ENCODE measurements at regions of chr9 and their contacts with region 1.

Region 1: GRCh38 chr9:77456829-77457437 is 191.2 kb downstream of the GNA14 start:
- DNase-seq: peak; percentile 91
- H3K4me3 ChIP-seq: no peak overlapping the region
- H3K27ac ChIP-seq: no peak overlapping the region
- H3K4me1 ChIP-seq: peaks cover 4% of the 10 kb centered on the region
- H3K27me3 ChIP-seq: no peaks in the 10 kb centered on the region
- CTCF ChIP-seq: peak; percentile 42 to 94 (median 86)
- POLR2A ChIP-seq: no peak

Region 2: GRCh38 chr9:77534376-77535057 is 77.6 kb after region 1 on chr9:
- intact Hi-C with region 1: no loop called
- DNase-seq: peak; percentile 62
- H3K4me3 ChIP-seq: no peak overlapping the region
- H3K27ac ChIP-seq: peak overlapping the region; percentile 50 to 77
- H3K4me1 ChIP-seq: peaks cover 14% of the 10 kb centered on the region
- H3K27me3 ChIP-seq: no peaks in the 10 kb centered on the region
- CTCF ChIP-seq: no peak
- POLR2A ChIP-seq: no peak

Region 3: GRCh38 chr9:77743386-77743785 is 286.5 kb after region 1 on chr9:
- intact Hi-C with region 1: loop called (anchors 10 kb)
- DNase-seq: no peak
- H3K4me3 ChIP-seq: no peak overlapping the region
- H3K27ac ChIP-seq: no peak overlapping the region
- H3K4me1 ChIP-seq: no peaks in the 10 kb centered on the region
- H3K27me3 ChIP-seq: no peaks in the 10 kb centered on the region
- CTCF ChIP-seq: no peak
- POLR2A ChIP-seq: no peak

Measured in testis (tissue), 5 donors.